ENCODE measurements at regions of chr2 and their contacts with region 1.

Region 1: GRCh38 chr2:195656859-195657633 is at the start of gene SLC39A10:
- DNase-seq: peak; percentile 97
- ATAC-seq: peak; percentile 84
- H3K4me3 Mint-ChIP-seq: peak within 1 kb of the TSS; percentile 98
- H3K27ac Mint-ChIP-seq: peak within 1 kb of the TSS; percentile 99
- H3K4me1 Mint-ChIP-seq: peaks cover 64% of the 10 kb centered on the region
- H3K27me3 Mint-ChIP-seq: no peaks in the 10 kb centered on the region
- CTCF ChIP-seq: no peak
- total RNA-seq, gene SLC39A10: 45.7 and 52.3 TPM in 2 replicates

Region 2: GRCh38 chr2:195318440-195319111 is 338.5 kb before region 1 on chr2:
- CTCF ChIA-PET with region 1: interaction called, 10 read pairs
- POLR2A ChIA-PET with region 1: no interaction called
- intact Hi-C with region 1: loop called (anchors 1 kb)
- DNase-seq: no peak
- ATAC-seq: no peak
- H3K4me3 Mint-ChIP-seq: no peak overlapping the region
- H3K27ac Mint-ChIP-seq: no peak overlapping the region
- H3K4me1 Mint-ChIP-seq: peaks cover 2% of the 10 kb centered on the region
- H3K27me3 Mint-ChIP-seq: no peaks in the 10 kb centered on the region
- CTCF ChIP-seq: peak; percentile 81

Region 3: DNA sequence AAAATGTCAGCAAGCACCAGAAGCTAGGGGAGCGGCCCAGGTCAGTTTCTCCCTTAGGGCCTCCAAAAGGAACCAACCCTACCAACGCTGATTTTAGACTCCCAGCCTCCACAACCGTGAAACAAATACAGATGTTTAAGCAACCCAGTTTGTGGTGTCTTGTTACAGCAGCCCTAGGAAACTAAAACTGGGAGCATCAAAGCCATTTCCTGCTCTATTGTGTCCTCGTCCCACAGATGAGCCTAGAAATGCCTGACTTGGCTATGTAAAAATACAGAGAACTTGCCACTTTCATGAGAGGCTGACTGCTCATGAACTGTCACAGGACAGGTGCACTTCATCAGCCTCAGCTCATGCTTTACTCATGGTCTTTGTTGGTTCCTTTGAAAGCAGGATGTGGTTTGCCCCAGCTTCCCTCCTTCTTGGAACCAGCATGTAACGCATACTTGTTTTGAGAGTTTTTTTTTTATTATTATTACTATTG is 97.6 kb before region 1 on chr2:
- CTCF ChIA-PET with region 1: interaction called, 41 read pairs
- POLR2A ChIA-PET with region 1: interaction called, 202 read pairs
- intact Hi-C with region 1: loop called (anchors 1 kb)
- DNase-seq: no peak
- ATAC-seq: peak; percentile 70
- H3K4me3 Mint-ChIP-seq: peak overlapping the region; percentile 32
- H3K27ac Mint-ChIP-seq: peak overlapping the region; percentile 98
- H3K4me1 Mint-ChIP-seq: peaks cover 62% of the 10 kb centered on the region
- H3K27me3 Mint-ChIP-seq: no peaks in the 10 kb centered on the region
- CTCF ChIP-seq: no peak

Region 4: GRCh38 chr2:195626507-195626906 is 30.5 kb before region 1 on chr2:
- CTCF ChIA-PET with region 1: interaction called, 6 read pairs
- POLR2A ChIA-PET with region 1: interaction called, 40 read pairs
- intact Hi-C with region 1: no loop called
- DNase-seq: no peak
- ATAC-seq: peak; percentile 31
- H3K4me3 Mint-ChIP-seq: no peak overlapping the region
- H3K27ac Mint-ChIP-seq: no peak overlapping the region
- H3K4me1 Mint-ChIP-seq: peaks cover 19% of the 10 kb centered on the region
- H3K27me3 Mint-ChIP-seq: no peaks in the 10 kb centered on the region
- CTCF ChIP-seq: no peak

Region 5: DNA sequence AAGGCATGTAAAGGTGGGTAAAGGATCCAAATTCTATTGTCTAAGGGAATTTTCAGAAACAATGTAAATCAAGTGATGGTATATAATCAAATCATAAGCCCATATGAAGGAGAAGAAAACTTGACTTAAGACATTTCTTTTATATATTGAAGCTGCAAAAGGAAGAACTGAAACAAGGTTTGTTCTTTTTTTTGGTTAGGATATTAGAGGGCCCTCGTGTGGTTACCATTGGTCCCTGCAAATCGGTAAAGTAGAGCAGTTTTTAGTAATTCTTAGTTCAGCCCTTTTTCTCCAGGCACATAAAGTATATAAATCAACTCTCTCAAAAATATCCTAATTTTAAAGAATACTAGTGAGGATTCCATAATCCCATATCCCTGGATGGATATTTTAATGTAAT is 620.0 kb after region 1 on chr2:
- CTCF ChIA-PET with region 1: no interaction called
- POLR2A ChIA-PET with region 1: no interaction called
- intact Hi-C with region 1: loop called (anchors 5 kb)
- DNase-seq: no peak
- ATAC-seq: peak; percentile 48
- H3K4me3 Mint-ChIP-seq: no peak overlapping the region
- H3K27ac Mint-ChIP-seq: peak overlapping the region; percentile 95
- H3K4me1 Mint-ChIP-seq: peaks cover 41% of the 10 kb centered on the region
- H3K27me3 Mint-ChIP-seq: no peaks in the 10 kb centered on the region
- CTCF ChIP-seq: peak; percentile 34

Region 6: GRCh38 chr2:197453161-197453914 is 1796.3 kb after region 1 on chr2 and contains the start of gene COQ10B:
- CTCF ChIA-PET with region 1: no interaction called
- POLR2A ChIA-PET with region 1: no interaction called
- intact Hi-C with region 1: loop called (anchors 10 kb)
- DNase-seq: peak; percentile 91
- ATAC-seq: peak; percentile 88
- H3K4me3 Mint-ChIP-seq: peak within 1 kb of the TSS; percentile 91
- H3K27ac Mint-ChIP-seq: peak within 1 kb of the TSS; percentile 94
- H3K4me1 Mint-ChIP-seq: peaks cover 45% of the 10 kb centered on the region
- H3K27me3 Mint-ChIP-seq: no peaks in the 10 kb centered on the region
- CTCF ChIP-seq: no peak
- total RNA-seq, gene COQ10B: 25.1 and 27.5 TPM in 2 replicates

Measured in activated B cell treated with CpG ODN at 0.5 μM for 24 hours (primary cell).